Posterior cingulate gyrus (tissue), 11 donors: ENCODE measurements at regions of chr22 and their contacts with region 1.

Region 1: DNA sequence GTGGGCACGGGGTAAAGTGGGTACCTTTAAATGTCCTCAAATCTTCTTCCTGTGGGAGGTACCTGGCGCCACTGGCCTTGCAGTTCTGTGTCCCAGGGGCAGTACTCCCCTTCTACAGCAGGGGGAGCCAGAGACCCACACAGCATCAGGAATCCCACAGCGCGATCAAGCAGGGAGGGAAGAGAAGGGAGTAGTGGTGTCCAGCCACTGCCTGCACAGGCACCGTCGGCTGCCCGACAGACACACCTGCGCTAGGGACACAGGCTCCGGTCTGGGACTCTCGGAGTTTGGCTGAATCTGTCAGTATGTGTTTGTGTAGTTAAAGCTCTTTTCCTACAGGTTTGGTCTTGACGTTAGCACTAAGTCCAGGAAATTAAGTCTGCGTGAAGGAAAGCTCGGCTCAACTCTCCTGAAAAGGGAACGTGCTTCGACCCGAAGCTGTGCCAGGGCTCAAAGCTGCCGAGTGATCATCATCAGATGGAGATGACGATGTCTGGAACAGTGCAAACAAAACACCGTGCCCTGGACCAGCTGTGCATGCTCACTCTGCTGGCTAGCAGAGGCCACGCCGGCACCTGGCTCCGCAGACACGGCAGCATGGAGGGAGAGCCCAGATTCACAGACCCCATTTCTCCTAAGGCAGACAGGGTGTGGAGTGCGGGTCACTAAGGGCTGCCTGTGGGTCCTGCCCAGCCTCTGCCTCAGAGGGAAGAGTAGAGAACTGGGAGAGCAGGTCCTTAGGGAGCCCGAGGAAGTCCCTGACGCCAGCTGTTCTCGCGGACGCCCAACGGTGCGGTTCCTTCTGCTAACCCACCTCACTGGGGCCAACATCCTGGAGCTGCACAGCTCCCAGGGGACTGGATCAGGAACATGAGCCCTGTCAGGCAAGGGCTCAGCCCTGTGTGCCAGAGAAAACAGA is 56.0 kb upstream of the BID start:
- DNase-seq: peak; percentile 78 to 98 (median 91)

Region 2: DNA sequence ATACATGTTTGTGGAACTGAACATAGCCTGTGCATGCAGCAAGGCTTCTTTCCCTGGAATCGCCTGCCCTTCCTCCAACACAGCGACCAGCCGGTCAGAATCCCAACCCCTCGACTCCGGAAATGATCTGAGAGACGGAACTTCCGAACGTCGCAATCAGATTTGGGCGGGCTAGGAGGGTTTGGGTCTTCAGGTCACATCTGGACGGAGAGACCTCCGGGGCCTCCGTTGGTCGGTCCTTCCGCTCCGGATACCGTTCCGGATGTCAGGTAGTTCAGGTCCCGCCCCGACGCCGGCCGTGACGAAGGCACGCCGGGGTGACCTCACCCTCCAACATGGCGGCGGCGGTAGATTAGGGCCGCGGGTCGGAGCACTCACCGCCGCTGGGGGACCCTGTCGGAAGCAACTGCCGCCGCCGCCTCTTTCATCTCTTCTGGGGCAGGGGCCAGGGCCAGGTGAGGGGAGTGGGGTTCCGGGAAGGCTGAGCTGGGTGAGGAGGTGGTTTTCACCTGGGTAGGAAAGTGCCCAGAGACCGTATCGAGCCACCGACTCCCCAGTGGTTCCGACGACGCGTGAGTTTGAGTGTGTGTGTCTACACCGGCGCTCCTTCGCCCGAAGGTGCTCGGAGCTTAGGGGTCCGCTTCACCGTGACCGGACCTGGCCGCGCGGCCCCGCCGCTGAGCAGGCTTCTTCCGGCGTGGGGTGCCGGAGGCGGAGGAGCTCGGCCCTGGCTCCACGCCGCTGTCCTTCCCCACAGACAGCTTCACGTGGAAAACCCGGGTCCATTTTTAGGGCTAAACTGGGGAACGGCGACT is 191.7 kb before region 1 on chr22 and contains the start of gene BCL2L13:
- intact Hi-C with region 1: no loop called
- DNase-seq: peak; percentile 81 to 98 (median 90)

Region 3: DNA sequence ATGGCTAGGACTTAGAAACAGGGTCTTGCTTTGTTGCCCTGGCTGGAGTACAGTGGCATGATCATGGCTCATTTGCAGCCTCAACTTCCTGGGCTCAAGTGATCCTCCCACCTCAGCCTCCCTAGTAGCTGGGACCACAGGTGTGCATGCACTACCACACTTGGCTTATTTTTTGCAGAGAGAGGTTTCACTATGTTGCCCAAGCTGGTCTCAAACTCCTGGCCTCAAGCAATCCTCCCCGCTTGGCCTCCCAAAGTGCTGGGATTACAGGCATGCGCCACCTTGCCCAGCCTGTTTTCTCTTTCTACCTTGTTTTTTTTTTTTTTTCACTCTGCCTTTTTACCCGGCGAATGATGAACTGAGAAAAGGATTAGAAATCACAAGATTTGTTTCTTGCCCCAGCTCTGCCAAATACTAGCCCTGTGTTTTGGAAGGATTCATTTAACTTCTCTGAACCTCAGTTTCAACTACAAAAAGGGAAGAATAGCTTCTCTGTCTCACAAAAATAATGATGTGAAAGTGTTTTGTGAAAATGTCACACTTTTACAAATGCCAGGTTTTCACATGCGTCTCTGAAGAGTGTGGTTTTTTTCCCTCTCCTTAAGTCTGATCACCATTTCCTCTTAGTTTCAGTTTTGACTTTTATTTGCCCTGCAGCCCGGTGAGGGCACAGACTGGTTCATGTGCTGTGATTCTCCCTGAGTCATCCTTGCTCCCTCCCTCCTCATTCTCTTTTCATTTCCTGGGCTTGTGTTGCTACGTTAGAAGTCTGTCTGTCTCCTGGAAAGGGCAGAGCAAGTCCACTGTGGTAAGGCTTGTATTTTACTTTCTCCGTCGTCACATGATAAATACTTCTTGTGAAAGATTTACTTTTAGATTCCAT is 124.0 kb before region 1 on chr22:
- intact Hi-C with region 1: no loop called
- DNase-seq: peak in 1 of 10 donors; percentile 29

Region 4: GRCh38 chr22:17797721-17798559 is 32.4 kb before region 1 on chr22:
- intact Hi-C with region 1: no loop called
- DNase-seq: no peak

Region 5: GRCh38 chr22:17866127-17866526 is 35.8 kb after region 1 on chr22:
- intact Hi-C with region 1: loop called (anchors 2 kb)
- DNase-seq: peak; percentile 71 to 98 (median 86)

Region 6: DNA sequence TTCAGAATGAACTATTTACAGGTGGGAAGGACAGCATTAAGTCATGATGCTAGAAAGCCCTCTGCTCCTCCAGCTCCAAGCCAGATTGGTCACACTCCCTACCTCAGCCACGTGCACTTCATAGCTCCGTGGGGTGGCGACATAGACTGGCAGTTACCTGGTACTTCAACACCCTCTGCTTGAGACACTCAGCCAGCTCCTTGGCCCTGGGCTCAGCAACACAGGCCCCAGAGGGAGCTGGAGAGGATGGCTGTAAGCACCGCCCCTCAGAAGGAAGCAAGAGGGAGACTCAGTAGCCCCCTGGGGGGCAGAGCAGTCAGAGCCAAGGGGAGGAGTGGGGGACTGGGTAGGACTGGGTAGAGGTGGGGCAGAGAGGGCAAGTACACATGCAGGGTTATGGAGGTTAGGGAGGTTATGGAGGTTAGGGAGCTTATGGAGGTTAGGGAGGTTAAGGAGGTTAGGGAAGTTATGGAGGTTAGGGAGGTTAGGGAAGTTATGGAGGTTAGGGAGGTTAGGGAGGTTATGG is 46.1 kb after region 1 on chr22:
- intact Hi-C with region 1: no loop called
- DNase-seq: peak in 1 of 10 donors; percentile 68

Region 7: GRCh38 chr22:17891481-17892167 is 61.3 kb after region 1 on chr22:
- intact Hi-C with region 1: loop called (anchors 1 kb)
- DNase-seq: peak in 7 of 10 donors; percentile 56 to 95 (median 74)